Common myeloid progenitor, CD34-positive (primary cell): ENCODE measurements at regions of chr16 and their contacts with region 1.

Region 1: DNA sequence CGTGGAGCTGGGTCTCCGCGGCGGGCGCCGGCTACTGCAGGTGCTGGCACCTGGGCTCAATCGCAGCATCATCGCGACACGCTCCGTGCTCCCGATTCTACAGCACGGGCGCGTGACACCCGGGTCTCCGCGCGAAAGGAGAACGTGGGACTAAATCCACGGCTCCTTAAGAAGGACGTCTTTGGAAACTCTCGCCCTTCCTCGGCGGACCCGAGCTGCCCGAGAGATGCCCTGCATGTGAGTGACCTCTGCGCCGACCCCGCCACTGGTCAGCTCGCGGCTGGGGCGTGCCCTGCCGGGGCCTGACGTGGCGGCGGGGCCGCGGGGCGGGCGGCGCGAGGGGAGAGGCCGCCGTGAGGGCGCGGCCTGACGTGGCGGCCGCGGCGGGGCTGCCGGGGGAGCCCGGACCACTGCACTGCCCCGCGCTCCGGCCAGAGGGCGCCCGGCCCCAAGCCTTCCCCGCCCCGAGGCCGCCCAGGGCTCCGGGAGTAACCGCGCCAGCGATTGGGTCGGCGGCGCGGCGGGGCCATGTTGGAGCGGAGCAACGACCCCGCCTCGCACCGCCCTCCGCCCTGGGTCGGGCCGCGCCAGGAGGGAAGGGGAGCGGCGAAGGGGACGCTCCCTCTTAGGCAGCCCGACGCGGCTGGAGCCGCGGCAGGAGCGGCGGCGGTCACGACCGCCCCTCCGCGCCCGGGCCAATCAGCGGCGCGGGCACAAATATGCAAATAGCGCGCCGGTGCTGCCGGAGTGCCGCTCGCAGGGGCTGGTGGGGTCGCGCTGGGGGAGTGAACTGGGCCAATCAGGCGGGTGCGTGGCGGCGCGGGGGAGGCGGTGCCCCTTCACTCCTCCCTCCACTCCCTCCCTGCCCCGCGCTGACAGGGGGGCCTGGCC is 75.6 kb downstream of the CHD9 start:
- DNase-seq: peak; percentile 95 to 98 (median 97)
- H3K4me3 ChIP-seq: peak overlapping the region; percentile 70 to 94 (median 89)
- H3K27ac ChIP-seq: peak overlapping the region; percentile 68 to 87
- H3K4me1 ChIP-seq: peaks cover 3 to 16% (median 12%) of the 10 kb centered on the region in 4 experiments
- H3K27me3 ChIP-seq: no peaks in the 10 kb centered on the region

Region 2: DNA sequence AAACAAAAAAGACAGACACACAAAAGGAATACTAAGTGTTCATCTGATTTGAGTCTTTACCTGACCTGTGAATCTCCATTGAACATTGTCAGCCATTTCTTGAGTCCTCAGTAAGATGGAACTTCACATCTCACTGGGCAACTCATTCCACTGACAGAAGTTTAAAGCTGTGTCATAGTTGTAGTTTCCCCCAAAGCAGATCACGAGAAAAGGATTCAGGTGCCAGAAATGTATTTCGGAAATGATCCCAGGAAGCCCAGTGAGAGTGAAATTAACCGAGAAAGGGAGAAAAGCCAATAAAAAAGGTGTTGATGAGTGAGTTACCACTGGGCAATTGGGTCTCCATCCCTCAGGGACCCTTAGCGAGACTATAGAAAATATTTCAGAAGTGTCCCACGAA is 69.1 kb before region 1 on chr16:
- CTCF ChIA-PET with region 1: interaction called, 16 read pairs
- POLR2A ChIA-PET with region 1: interaction called, 3 read pairs
- DNase-seq: no peak
- H3K4me3 ChIP-seq: no peak overlapping the region
- H3K27ac ChIP-seq: no peak overlapping the region
- H3K4me1 ChIP-seq: peaks cover 2 to 30% (median 22%) of the 10 kb centered on the region in 4 experiments
- H3K27me3 ChIP-seq: no peaks in the 10 kb centered on the region

Region 3: GRCh38 chr16:53191413-53191812 is 61.0 kb after region 1 on chr16:
- CTCF ChIA-PET with region 1: no interaction called
- POLR2A ChIA-PET with region 1: no interaction called
- DNase-seq: no peak
- H3K4me3 ChIP-seq: no peak overlapping the region
- H3K27ac ChIP-seq: no peak overlapping the region
- H3K4me1 ChIP-seq: no peaks in the 10 kb centered on the region
- H3K27me3 ChIP-seq: no peaks in the 10 kb centered on the region